ENCODE measurements at regions of chr12 and their contacts with region 1.

Region 1: DNA sequence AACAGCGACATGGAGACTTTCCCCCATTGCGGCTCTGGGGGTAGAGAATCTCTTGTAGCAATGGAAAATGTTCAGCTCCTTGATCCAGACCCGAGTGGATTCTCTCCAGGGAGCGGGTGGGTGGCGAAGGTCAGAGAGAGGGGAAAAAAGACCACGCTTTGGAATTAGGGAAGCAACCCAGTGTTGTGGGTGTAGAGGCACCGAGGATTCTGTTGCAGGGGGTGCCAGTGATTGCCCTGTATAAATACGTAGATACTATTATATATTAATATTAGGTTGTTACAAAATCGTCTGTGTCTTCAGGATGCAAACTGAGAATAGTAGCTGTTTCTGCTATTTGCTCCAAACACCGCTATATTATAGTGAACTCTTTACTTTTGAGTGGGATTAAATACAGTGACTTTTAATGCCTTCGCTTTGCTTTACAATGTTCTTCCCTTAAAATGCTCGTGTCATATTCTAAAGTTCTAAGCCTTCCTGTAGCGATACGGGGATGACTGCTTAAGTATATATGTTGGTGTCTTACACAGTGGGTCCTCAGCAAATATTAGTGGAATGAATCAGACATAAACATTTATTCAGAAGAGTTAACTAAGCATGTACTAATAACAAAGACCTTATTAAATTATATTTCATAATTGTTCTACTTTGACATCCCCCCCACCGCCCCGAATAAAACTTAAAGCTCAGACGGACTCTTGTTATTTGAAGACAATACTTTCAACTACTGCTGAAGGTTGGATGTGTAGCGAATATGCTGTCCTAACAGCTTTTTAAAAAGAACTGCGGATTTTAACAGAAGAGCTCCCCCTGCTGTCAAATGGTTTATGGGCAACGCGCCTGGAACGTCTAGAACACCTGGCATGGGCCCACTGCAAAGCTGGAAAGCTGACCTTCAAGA is 136.4 kb upstream of the KRAS start:
- DNase-seq: peak; percentile 89
- H3K4me3 Mint-ChIP-seq: peak overlapping the region; percentile 96
- H3K27ac Mint-ChIP-seq: peak overlapping the region; percentile 91
- H3K4me1 Mint-ChIP-seq: peaks cover 9% of the 10 kb centered on the region
- H3K27me3 Mint-ChIP-seq: no peaks in the 10 kb centered on the region
- CTCF ChIP-seq: peak; percentile 72

Region 2: DNA sequence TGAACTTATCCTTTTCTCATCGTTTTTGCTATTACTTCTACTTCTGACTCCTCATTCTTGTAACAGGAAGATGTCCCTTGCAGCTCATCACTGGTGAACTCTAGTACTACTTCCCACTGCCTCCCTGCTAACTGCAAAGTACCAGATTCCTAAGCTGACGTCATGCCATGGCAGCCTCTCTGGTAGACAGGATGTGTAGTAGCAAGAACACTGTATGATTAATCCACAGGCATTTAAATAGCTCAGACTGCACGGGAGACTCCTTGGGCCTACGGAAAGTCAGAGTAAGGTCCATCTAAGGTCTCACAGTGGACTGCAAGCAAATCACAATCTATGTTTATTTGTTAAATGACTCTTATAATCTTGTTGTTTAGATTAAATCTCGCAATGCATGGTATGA is 235.6 kb before region 1 on chr12:
- CTCF ChIA-PET with region 1: interaction called, 4 read pairs
- POLR2A ChIA-PET with region 1: interaction called, 5 read pairs
- intact Hi-C with region 1: loop called (anchors 1 kb)
- DNase-seq: peak; percentile 76
- H3K4me3 Mint-ChIP-seq: no peak overlapping the region
- H3K27ac Mint-ChIP-seq: no peak overlapping the region
- H3K4me1 Mint-ChIP-seq: peaks cover 10% of the 10 kb centered on the region
- H3K27me3 Mint-ChIP-seq: no peaks in the 10 kb centered on the region
- CTCF ChIP-seq: no peak

Region 3: DNA sequence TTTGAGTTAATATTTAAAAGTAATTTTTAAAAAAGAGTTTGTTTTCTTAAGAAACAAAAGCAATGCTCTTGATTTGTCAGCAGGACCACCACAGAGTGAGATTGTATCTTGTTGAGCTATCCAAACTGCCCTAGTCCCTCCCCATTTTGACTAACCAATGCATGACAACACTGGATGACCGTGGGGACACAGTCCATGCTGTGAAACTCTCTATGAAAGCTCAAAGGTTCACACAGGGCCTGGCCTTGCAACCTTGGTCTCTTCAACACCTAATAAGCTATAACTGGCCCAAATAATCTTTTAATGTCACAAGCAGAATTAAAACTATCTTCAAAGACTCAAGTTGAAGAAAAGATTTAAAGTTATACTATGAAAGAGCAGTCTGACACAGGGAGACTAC is 178.5 kb before region 1 on chr12:
- CTCF ChIA-PET with region 1: interaction called, 6 read pairs
- POLR2A ChIA-PET with region 1: interaction called, 3 read pairs
- intact Hi-C with region 1: loop called (anchors 1 kb)
- DNase-seq: no peak
- H3K4me3 Mint-ChIP-seq: no peak overlapping the region
- H3K27ac Mint-ChIP-seq: peak overlapping the region; percentile 16
- H3K4me1 Mint-ChIP-seq: no peaks in the 10 kb centered on the region
- H3K27me3 Mint-ChIP-seq: no peaks in the 10 kb centered on the region
- CTCF ChIP-seq: no peak

Region 4: GRCh38 chr12:25241167-25242020 is 145.7 kb before region 1 on chr12:
- CTCF ChIA-PET with region 1: interaction called, 13 read pairs
- POLR2A ChIA-PET with region 1: interaction called, 5 read pairs
- intact Hi-C with region 1: loop called (anchors 1 kb)
- DNase-seq: peak; percentile 48
- H3K4me3 Mint-ChIP-seq: no peak overlapping the region
- H3K27ac Mint-ChIP-seq: no peak overlapping the region
- H3K4me1 Mint-ChIP-seq: peaks cover 4% of the 10 kb centered on the region
- H3K27me3 Mint-ChIP-seq: no peaks in the 10 kb centered on the region
- CTCF ChIP-seq: peak; percentile 55

Region 5: GRCh38 chr12:25250744-25251730 is 136.0 kb before region 1 on chr12 and contains the start of gene KRAS:
- CTCF ChIA-PET with region 1: interaction called, 13 read pairs
- POLR2A ChIA-PET with region 1: interaction called, 3 read pairs
- intact Hi-C with region 1: no loop called
- DNase-seq: peak; percentile 96
- H3K4me3 Mint-ChIP-seq: peak within 1 kb of the TSS; percentile 82
- H3K27ac Mint-ChIP-seq: peak within 1 kb of the TSS; percentile 79
- H3K4me1 Mint-ChIP-seq: peaks cover 6% of the 10 kb centered on the region
- H3K27me3 Mint-ChIP-seq: no peaks in the 10 kb centered on the region
- CTCF ChIP-seq: no peak
- total RNA-seq, gene KRAS: 17.6 and 21.7 TPM in 2 replicates

Measured in MCF 10A (cell line).